ENCODE measurements at regions of chr12 and their contacts with region 1.

Region 1: DNA sequence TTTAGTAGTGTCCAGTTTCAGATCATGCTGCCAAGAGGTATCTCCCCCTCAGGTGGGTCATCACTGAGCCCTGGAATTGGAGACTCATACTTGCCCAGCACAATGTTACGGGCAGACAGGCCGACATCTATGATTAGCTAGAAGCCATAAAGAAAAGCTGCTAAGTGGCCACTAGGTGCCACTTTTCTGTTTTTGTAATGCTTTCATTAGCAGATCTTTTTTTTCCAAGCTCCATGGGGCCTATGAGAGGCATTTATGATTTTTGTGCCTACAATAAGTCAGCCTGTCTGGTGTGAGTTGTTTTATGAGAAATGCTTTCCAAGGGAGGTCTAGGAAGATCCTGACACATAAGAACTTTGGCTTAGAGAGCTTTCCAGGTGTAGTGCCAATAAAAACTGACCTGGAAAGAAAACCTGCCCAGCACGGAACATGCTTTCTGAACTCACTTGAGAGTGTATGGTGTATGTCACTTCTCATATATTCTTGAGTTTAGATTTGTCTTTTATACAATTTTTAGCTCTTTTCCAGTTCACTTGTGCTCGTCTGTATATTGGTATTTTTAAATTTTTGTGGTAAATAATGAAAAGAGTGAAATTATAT is 21.8 kb upstream of the SMCO2 start:
- DNase-seq: no peak
- ATAC-seq: peak; percentile 62
- H3K4me3 ChIP-seq: no peak overlapping the region
- H3K27ac ChIP-seq: no peak overlapping the region
- H3K4me1 ChIP-seq: no peaks in the 10 kb centered on the region
- H3K27me3 ChIP-seq: no peaks in the 10 kb centered on the region
- CTCF ChIP-seq: peak; percentile 38 to 48 (median 39); a peak in 5 of 6 replicates
- EP300 ChIP-seq: no peak
- POLR2A ChIP-seq: no peak
- RAD21 ChIP-seq: peak; percentile 45

Region 2: DNA sequence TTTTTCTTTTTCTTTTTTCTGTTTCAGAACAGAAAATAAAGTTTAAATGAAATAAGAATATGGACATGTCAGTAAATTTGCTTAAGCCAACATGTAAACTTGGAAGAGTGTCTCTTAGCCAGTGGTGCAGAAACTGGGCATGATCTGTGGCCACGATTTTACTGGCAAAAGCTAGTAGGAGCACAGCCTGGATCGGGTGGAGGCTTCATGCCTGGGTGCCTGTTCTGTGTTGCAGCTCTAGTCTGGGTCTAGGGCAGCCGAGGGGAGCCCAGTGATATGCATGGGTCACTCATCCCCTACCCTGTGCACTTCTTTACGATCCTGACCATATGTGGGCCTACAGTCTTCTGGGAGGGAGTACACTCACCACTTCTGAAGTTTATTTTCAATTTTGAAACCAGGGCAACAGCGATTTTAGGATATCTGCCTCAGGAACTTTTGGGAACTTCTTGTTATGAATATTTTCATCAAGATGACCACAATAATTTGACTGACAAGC is 23.8 kb before region 1 on chr12:
- CTCF ChIA-PET with region 1: no interaction called
- POLR2A ChIA-PET with region 1: no interaction called
- RAD21 ChIA-PET with region 1: no interaction called
- SMC1A ChIA-PET with region 1: no interaction called
- in situ Hi-C with region 1: no loop called
- intact Hi-C with region 1: no loop called
- DNase-seq: no peak
- ATAC-seq: no peak
- H3K4me3 ChIP-seq: no peak overlapping the region
- H3K27ac ChIP-seq: no peak overlapping the region
- H3K4me1 ChIP-seq: no peaks in the 10 kb centered on the region
- H3K27me3 ChIP-seq: no peaks in the 10 kb centered on the region
- CTCF ChIP-seq: no peak
- EP300 ChIP-seq: no peak
- POLR2A ChIP-seq: no peak
- RAD21 ChIP-seq: no peak

Region 3: GRCh38 chr12:27652174-27652763 is 227.5 kb after region 1 on chr12:
- CTCF ChIA-PET with region 1: interaction called, 6 read pairs
- POLR2A ChIA-PET with region 1: no interaction called
- RAD21 ChIA-PET with region 1: interaction called, 3 read pairs
- SMC1A ChIA-PET with region 1: interaction called, 3 read pairs
- in situ Hi-C with region 1: loop called (anchors 25 kb)
- intact Hi-C with region 1: no loop called
- DNase-seq: peak; percentile 8
- ATAC-seq: peak; percentile 71
- H3K4me3 ChIP-seq: no peak overlapping the region
- H3K27ac ChIP-seq: no peak overlapping the region
- H3K4me1 ChIP-seq: peaks cover 5% of the 10 kb centered on the region; the same call in 1 of the 2 replicates
- H3K27me3 ChIP-seq: no peaks in the 10 kb centered on the region
- CTCF ChIP-seq: peak; percentile 77 to 81 (median 80)
- EP300 ChIP-seq: no peak
- POLR2A ChIP-seq: no peak
- RAD21 ChIP-seq: peak; percentile 90

Measured in GM12878 (cell line).